HepG2 (cell line): ENCODE measurements at regions of chr2 and their contacts with region 1.

Region 1: DNA sequence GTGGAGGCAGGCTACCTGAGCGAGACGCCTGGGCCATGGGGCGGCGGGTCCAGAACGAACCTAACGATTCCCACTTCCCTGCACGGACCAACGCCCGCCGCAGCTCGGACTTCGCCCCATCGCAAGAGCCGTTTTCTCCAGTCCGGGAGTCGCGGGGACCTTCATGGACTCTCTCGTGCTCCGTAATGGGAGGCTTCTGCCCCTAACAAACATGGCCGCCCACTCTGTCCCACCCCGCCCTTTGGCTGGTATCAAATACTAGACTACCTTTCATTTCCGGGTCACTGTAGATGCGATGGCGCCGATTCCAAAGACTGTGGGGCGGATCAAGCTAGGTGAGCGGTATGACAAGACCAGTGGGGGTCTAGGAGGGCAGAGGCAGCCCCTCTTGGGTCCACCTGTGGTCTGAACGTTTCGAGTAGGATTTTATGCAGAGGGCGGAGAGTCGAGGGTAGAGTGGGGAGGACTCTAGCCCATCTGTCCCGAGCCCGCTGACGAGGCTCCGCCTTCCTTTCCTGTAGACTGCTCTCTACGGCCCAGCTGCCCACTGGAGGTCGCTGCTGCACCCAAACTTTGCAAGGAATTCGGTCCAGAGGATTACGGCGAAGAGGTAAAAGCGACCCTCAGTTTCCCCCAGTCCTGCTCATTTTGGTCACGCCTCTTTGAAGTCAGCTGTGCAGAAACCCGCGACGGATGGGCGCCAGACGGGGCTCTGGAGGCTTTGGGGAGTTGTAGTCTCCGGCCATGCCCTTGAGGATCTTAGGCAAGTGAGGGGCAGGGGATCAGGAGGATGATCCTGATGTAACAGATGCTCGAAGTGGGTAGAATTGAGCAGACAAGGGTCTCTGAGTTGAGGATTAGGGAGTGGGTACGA is at the starts of genes CCDC142 and TTC31:
- DNase-seq: peak; percentile 97
- ATAC-seq: peak; percentile 91
- H3K4me3 ChIP-seq: peak within 1 kb of the TSS; percentile 82 to 87 (median 83)
- H3K27ac ChIP-seq: peak within 1 kb of the TSS; percentile 89
- H3K4me1 ChIP-seq: peaks cover 70% of the 10 kb centered on the region
- H3K27me3 ChIP-seq: no peaks in the 10 kb centered on the region; a peak in 1 of 5 replicates
- CTCF ChIP-seq: peak; percentile 99
- EP300 ChIP-seq: 0 out of 4 replicates have a peak, but pooled peaks of 1 of the 2 experiments have one; percentile 31
- POLR2A ChIP-seq: peak; percentile 75 to 89
- RAD21 ChIP-seq: peak; percentile 94
- total RNA-seq, gene CCDC142: 8.8 and 30.4 TPM in 2 replicates
- total RNA-seq, gene TTC31: 21.1 and 28.3 TPM in 2 replicates

Region 2: GRCh38 chr2:74458132-74458925 is 24.7 kb before region 1 on chr2 and contains the start of gene WBP1:
- CTCF ChIA-PET with region 1: interaction called, 3 read pairs
- POLR2A ChIA-PET with region 1: interaction called, 93 read pairs
- in situ Hi-C with region 1: no loop called
- intact Hi-C with region 1: loop called (anchors 1 kb)
- DNase-seq: peak; percentile 100
- ATAC-seq: peak; percentile 92
- H3K4me3 ChIP-seq: peak within 1 kb of the TSS; percentile 76 to 92 (median 88)
- H3K27ac ChIP-seq: peak within 1 kb of the TSS; percentile 89
- H3K4me1 ChIP-seq: peaks cover 41% of the 10 kb centered on the region
- H3K27me3 ChIP-seq: no peaks in the 10 kb centered on the region; a peak in 1 of 5 replicates
- CTCF ChIP-seq: no peak
- EP300 ChIP-seq: no peak; a peak in 1 of 4 replicates
- POLR2A ChIP-seq: peak in 1 of 2 experiments; percentile 62; a peak in 2 of 4 replicates
- RAD21 ChIP-seq: 0 out of 2 replicates have a peak, but pooled peaks have one; percentile 26
- total RNA-seq, gene WBP1: 26.5 and 38.8 TPM in 2 replicates

Region 3: GRCh38 chr2:74464406-74464928 is 18.6 kb before region 1 on chr2:
- CTCF ChIA-PET with region 1: interaction called, 5 read pairs
- POLR2A ChIA-PET with region 1: interaction called, 93 read pairs
- in situ Hi-C with region 1: no loop called
- intact Hi-C with region 1: no loop called
- DNase-seq: no peak
- ATAC-seq: peak; percentile 20
- H3K4me3 ChIP-seq: peak overlapping the region; percentile 74 to 92 (median 83)
- H3K27ac ChIP-seq: peak overlapping the region; percentile 89
- H3K4me1 ChIP-seq: peaks cover 36% of the 10 kb centered on the region
- H3K27me3 ChIP-seq: no peaks in the 10 kb centered on the region; a peak in 1 of 5 replicates
- CTCF ChIP-seq: no peak
- EP300 ChIP-seq: no peak
- POLR2A ChIP-seq: no peak
- RAD21 ChIP-seq: no peak

Region 4: DNA sequence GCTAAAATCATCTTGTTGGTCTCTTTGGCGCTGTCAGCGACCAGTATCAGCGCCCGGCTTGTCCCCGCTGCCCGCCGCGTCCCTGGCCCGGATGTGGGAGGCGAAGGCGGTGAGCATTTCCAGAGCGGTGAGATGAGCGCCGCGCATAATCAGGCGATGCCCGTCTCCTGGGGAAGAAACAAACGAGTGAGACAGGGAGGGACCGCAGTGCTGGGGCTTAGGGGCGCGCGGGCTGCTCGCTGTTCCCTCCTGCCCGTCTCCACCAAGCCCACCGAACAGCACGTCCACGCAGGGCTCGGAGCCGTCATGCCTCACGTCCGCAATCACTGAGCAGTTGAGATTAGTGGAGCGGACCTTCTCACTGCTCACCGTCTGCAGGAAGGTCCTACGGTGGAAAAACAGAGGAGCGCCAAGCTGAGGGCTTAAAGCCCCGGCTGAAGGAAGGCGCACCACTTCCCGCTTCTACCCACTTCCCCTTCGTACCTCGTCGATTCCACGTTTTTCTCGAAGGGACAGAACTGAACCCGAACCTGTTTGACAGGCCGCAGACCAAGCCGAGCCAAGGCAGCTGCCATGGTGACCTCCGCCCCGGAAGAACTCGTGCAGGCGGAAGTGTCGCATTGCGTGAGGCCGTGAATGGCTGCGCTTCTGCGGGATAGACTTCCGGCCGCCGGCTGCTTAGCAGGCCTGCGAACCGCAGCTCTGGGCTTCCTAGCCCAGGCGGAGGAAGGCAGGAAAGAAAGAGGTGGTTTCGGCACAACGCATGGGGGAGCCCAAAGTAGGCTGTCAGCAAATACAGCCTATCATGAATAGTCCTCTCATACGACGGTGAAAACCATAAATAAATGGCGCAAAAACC is 10.7 kb before region 1 on chr2 and contains the start of gene MRPL53:
- CTCF ChIA-PET with region 1: no interaction called
- POLR2A ChIA-PET with region 1: interaction called, 110 read pairs
- in situ Hi-C with region 1: no loop called
- intact Hi-C with region 1: no loop called
- DNase-seq: peak; percentile 92
- ATAC-seq: peak; percentile 87
- H3K4me3 ChIP-seq: peak within 1 kb of the TSS; percentile 67 to 91 (median 83)
- H3K27ac ChIP-seq: peak within 1 kb of the TSS; percentile 83
- H3K4me1 ChIP-seq: peaks cover 52% of the 10 kb centered on the region
- H3K27me3 ChIP-seq: no peaks in the 10 kb centered on the region; a peak in 1 of 5 replicates
- CTCF ChIP-seq: peak; percentile 42; the same call in 1 of the 2 replicates
- EP300 ChIP-seq: peak in 1 of 2 experiments; percentile 54; a peak in 2 of 4 replicates
- POLR2A ChIP-seq: peak; percentile 94 to 97
- RAD21 ChIP-seq: peak; percentile 45; the same call in 1 of the 2 replicates
- total RNA-seq, gene MRPL53: 51.9 and 53.8 TPM in 2 replicates

Region 5: GRCh38 chr2:74507145-74507925 is 24.3 kb after region 1 on chr2 and contains the start of gene PCGF1:
- CTCF ChIA-PET with region 1: interaction called, 20 read pairs
- POLR2A ChIA-PET with region 1: interaction called, 795 read pairs
- in situ Hi-C with region 1: no loop called
- intact Hi-C with region 1: loop called (anchors 1 kb)
- DNase-seq: peak; percentile 98
- ATAC-seq: peak; percentile 78
- H3K4me3 ChIP-seq: peak within 1 kb of the TSS; percentile 79 to 97 (median 95)
- H3K27ac ChIP-seq: peak within 1 kb of the TSS; percentile 95
- H3K4me1 ChIP-seq: peaks cover 72% of the 10 kb centered on the region
- H3K27me3 ChIP-seq: no peaks in the 10 kb centered on the region; a peak in 1 of 5 replicates
- CTCF ChIP-seq: peak; percentile 98
- EP300 ChIP-seq: peak in 1 of 2 experiments; percentile 47; a peak in 1 of 4 replicates
- POLR2A ChIP-seq: peak in 1 of 2 experiments; percentile 73; a peak in 2 of 4 replicates
- RAD21 ChIP-seq: peak; percentile 89
- total RNA-seq, gene PCGF1: 14.2 and 20.4 TPM in 2 replicates

Region 6: DNA sequence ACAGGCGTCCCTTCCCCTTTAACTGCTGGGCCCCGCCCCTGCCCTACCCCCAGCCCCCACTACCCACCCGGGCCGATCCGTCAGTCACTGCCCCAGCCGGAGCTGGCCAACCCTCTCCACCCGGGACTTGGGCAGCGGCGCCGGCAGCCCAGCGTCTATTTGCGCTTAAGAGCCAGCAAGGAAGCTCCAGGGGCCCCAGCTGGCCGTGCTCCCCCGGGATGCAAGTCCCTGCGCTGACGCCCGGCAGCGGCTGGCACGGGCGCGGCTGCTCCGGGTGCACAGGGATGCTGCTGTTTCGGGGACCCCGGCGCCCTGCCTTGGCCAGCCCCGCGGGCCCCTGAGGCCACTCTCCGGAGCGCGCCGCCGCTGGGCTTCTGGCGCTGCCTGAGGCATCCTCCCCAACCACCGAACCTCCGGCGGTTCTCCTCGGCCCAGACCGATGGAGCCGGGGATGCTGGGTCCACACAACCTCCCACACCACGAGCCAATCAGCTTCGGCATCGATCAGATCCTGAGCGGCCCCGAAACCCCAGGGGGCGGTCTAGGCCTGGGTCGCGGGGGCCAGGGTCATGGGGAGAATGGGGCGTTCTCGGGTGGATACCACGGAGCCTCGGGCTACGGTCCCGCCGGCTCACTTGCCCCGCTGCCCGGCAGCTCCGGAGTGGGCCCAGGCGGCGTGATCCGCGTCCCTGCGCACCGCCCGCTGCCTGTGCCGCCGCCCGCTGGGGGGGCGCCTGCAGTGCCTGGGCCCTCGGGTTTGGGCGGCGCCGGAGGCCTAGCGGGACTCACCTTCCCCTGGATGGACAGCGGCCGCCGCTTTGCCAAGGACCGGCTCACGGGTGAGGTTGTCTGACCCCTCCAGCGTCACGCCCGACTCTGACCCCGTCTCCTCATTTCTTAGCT is 31.6 kb after region 1 on chr2 and contains the start of gene TLX2:
- CTCF ChIA-PET with region 1: no interaction called
- POLR2A ChIA-PET with region 1: interaction called, 795 read pairs
- in situ Hi-C with region 1: no loop called
- intact Hi-C with region 1: no loop called
- DNase-seq: no peak
- ATAC-seq: no peak
- H3K4me3 ChIP-seq: peak within 1 kb of the TSS; percentile 43 to 63 (median 62); a peak in 5 of 6 replicates
- H3K27ac ChIP-seq: peak within 1 kb of the TSS; percentile 27
- H3K4me1 ChIP-seq: peaks cover 45% of the 10 kb centered on the region
- H3K27me3 ChIP-seq: no peaks in the 10 kb centered on the region
- CTCF ChIP-seq: no peak
- EP300 ChIP-seq: no peak
- POLR2A ChIP-seq: no peak
- RAD21 ChIP-seq: no peak
- total RNA-seq, gene TLX2: 0.20 TPM in 1 of 2 replicates, not detected in the other

Region 7: DNA sequence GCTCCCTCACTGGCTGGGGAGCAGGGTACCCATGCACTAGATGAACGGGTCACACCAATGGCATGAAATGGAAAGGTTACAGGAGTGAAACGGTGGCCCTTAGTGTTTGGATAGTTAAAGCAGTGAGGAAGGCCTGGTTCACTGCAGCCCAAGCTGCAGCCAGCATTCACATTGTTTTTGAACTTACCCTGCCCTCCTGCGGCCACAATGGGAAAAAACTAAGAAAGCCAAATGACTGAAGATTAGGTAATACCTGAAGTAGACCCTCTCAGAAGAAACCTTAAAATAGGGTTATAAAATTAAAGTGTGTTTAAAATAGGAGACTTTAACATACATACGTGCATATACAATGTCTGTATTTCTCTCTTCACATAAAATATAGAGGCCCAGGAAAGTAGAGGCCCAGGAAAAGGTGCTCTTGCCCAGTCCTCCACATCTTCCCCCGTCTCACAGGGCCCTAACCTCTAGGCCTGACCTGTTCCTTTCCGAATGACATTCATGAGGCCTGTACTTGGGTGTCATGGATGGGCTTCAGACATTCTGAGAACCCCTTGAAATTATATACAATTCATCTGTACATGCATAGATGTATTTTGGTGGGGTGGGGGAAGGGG is 104.7 kb after region 1 on chr2:
- CTCF ChIA-PET with region 1: interaction called, 12 read pairs
- POLR2A ChIA-PET with region 1: interaction called, 6 read pairs
- in situ Hi-C with region 1: loop called (anchors 5 kb)
- intact Hi-C with region 1: loop called (anchors 1 kb)
- DNase-seq: peak; percentile 77
- ATAC-seq: peak; percentile 96
- H3K4me3 ChIP-seq: no peak overlapping the region
- H3K27ac ChIP-seq: no peak overlapping the region
- H3K4me1 ChIP-seq: peaks cover 20% of the 10 kb centered on the region
- H3K27me3 ChIP-seq: peaks cover 0 to 4% of the 10 kb centered on the region in 2 experiments; a peak in 3 of 5 replicates
- CTCF ChIP-seq: peak; percentile 94
- EP300 ChIP-seq: no peak
- POLR2A ChIP-seq: no peak
- RAD21 ChIP-seq: peak; percentile 88

Region 8: DNA sequence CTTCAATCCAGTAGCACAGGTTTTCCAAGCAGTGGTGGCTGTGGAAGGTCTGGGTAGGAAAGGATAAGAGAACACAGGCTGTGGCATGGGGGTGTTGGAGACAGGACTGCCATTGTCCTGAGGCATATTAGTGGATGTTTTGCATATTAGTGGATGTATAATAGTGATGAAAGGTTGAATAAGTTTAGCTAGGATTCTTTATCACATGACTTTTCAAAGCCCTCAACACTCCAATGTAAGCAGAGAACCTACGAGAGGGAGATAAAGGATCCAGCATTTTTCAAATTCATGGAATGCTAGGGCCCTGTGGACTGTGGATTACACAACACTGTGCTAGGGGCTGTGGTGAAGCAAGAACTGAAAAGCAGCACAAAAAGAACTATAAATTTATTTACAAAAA is 538.6 kb after region 1 on chr2:
- CTCF ChIA-PET with region 1: no interaction called
- POLR2A ChIA-PET with region 1: no interaction called
- in situ Hi-C with region 1: no loop called
- intact Hi-C with region 1: no loop called
- DNase-seq: peak; percentile 91
- ATAC-seq: peak; percentile 99
- H3K4me3 ChIP-seq: no peak overlapping the region
- H3K27ac ChIP-seq: peak overlapping the region; percentile 18
- H3K4me1 ChIP-seq: peaks cover 10% of the 10 kb centered on the region
- H3K27me3 ChIP-seq: no peaks in the 10 kb centered on the region
- CTCF ChIP-seq: no peak
- EP300 ChIP-seq: peak in 1 of 2 experiments; percentile 6; a peak in 1 of 4 replicates
- POLR2A ChIP-seq: no peak
- RAD21 ChIP-seq: no peak